GM18951 (cell line): ENCODE measurements at regions of chr13 and their contacts with region 1.

Region 1: DNA sequence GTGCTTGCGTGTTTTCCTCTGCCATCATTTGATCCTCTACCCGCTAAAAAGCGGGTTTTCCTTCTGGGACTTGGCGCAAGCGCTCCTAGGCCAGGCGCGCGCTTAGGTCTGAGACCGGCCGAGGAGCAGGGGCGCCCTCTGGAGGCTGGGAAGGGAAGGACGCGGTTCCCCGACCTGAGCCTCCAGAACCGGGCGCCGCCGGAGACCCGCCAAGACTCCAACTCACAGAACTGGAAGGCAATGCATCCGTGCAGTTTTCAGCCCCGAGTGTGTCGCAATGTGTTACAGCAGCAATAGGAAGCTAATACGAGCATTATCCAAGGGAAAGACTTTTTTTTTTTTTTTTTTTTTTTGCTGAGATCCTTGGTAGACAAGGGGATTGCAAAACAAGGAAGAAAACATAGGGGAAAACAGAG is 190.9 kb downstream of the COL4A1 start:
- POLR2A ChIP-seq: no peak

Region 2: DNA sequence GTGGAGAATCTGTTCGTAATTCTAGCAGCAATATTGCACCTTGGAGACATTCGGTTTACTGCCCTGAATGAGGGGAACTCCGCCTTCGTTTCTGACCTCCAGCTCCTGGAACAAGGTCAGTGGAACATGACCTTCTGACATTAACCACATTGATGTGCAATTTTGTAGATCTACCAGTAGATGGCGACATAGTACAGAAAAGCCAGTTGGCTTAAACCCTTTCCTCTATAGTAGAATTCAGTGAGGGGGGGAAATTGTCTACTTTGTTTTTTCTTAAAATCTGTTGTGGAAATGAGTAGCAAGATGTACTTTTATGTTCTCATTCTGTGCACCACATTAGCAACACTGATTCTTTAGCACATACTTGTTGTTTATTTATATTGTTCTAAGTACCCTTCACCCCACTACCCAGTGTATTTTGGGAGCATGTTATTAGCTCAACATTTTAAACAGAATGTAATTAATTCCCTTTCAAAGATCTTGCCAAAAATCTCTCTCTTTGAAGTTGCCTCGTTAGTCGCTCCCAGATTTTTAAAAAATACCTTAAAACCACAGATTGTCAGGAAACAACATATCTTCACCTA is 1154.4 kb before region 1 on chr13:
- in situ Hi-C with region 1: loop called (anchors 25 kb)
- POLR2A ChIP-seq: no peak

Region 3: GRCh38 chr13:110023729-110024644 is 92.1 kb before region 1 on chr13:
- in situ Hi-C with region 1: no loop called
- POLR2A ChIP-seq: no peak

Region 4: DNA sequence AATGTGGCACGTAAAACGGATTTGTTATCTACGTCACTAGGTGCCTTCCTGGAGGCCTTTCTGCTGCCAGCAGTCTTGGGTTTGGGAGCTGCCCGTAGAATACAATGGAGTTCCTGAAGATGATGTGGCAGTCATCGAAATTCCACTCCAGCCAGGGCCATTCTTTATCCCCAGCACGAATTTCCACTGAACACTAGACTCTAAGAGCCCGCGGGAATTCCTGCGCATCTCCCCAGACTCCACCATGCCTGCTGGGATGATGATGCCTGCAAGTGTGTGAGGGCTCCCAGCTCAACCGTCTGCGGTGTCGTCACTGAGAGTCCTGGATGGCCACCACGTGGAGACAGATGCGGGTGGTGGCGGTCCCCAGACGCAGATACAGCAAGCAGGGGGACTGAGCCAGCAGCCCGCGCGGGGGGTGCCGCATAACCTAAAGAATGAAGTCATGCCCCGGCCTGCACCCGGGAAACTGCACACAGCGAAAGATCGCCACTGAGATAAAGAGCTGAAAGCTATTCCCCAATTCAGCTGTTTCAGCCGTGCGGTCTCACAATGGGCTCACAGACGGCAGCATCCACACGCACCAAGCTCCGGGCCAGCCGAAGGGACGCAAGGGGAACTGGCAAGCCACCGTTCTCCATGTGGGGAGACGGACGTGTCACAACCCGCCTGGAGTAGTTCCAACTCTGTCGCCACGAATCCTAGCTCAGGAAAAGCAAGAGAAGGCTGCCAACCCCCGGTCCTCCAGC is 149.8 kb after region 1 on chr13:
- in situ Hi-C with region 1: no loop called
- POLR2A ChIP-seq: no peak

Region 5: DNA sequence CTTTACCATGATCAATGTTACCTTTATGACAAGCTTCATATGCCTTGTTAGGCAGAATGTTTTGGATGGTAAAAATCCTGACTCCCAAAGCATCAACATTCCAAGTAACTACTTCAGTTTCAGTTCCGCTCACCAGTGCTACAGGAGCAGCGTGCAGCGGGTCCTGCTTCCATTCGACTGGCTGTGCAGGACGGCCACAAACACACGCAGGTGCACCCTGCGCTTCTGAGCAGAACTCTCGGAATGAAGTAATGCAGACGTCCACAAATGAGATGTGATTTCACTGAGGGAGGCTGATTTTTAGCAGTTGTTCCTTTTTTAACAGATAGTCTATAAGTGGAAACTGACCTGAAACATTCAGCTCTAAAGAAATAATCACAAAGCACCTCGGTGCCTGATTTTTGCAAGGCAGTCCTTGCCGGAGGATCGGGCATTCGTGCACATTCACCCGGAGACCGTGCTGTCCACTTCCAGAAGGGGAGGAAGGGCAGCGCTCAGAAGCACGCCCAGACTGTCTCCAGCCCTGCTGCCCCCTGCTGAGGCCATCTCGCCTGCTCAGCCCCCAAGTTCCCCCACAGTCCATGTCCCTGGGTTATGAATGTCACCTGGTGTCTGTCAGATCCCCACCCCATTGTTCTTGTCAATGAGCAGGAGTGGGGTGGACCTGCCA is 359.6 kb after region 1 on chr13:
- in situ Hi-C with region 1: no loop called
- POLR2A ChIP-seq: no peak